Left cardiac atrium (tissue), 4 donors: ENCODE measurements at regions of chr11 and their contacts with region 1.

Region 1: GRCh38 chr11:93784152-93784934 is at the start of gene MED17:
- DNase-seq: peak; percentile 94
- ATAC-seq: peak; percentile 100
- total RNA-seq, gene MED17: 19.3 to 21.8 TPM

Region 2: GRCh38 chr11:93741094-93741881 is 43.1 kb before region 1 on chr11 and contains the starts of genes C11orf54 and TAF1D:
- intact Hi-C with region 1: loop called in 1 of 2 experiments (anchors 5 kb)
- DNase-seq: peak; percentile 98
- ATAC-seq: peak; percentile 97
- total RNA-seq, gene C11orf54: 27.2 to 28.4 TPM
- total RNA-seq, gene TAF1D: 29.6 to 53.2 TPM